ENCODE measurements at regions of chr17 and their contacts with region 1.

Region 1: GRCh38 chr17:48586355-48587258 is 3.4 kb downstream of the HOXB3 start:
- DNase-seq: no peak
- ATAC-seq: no peak
- H3K4me3 ChIP-seq: no peak overlapping the region; the same call in 2 of the 3 replicates
- H3K27ac ChIP-seq: peak overlapping the region; percentile 71 to 86; a peak in 5 of 6 replicates
- H3K4me1 ChIP-seq: peaks cover 21% of the 10 kb centered on the region
- CTCF ChIP-seq: no peak
- EP300 ChIP-seq: no peak
- POLR2A ChIP-seq: no peak
- RAD21 ChIP-seq: no peak

Region 2: DNA sequence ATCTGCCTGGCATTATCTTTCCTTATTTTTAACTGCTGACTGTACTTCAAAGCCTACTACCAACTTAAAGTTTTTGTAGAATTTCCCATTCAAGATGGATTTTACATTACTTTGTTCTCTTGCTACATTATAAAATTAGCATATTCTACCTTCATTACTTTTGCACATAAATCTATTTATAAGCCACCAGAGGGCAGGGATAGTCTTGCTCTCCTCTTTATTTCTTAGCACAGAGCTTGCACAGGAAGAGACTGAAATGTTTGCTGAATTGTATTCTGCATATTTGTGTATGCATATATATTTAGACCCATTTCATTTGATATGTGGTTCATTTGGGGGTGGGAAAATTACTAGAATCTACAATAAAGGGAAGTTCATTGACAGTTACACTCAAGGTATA is 264.5 kb before region 1 on chr17:
- CTCF ChIA-PET with region 1: interaction called, 13 read pairs
- POLR2A ChIA-PET with region 1: no interaction called
- DNase-seq: peak; percentile 15 to 30
- ATAC-seq: peak; percentile 44 to 54; a peak in 1 of 6 replicates
- H3K4me3 ChIP-seq: no peak overlapping the region
- H3K27ac ChIP-seq: no peak overlapping the region
- H3K4me1 ChIP-seq: no peaks in the 10 kb centered on the region
- CTCF ChIP-seq: 0 out of 3 replicates have a peak, but pooled peaks have one; percentile 19
- EP300 ChIP-seq: no peak
- POLR2A ChIP-seq: no peak
- RAD21 ChIP-seq: peak in 1 of 2 experiments; percentile 27; a peak in 2 of 5 replicates

Region 3: DNA sequence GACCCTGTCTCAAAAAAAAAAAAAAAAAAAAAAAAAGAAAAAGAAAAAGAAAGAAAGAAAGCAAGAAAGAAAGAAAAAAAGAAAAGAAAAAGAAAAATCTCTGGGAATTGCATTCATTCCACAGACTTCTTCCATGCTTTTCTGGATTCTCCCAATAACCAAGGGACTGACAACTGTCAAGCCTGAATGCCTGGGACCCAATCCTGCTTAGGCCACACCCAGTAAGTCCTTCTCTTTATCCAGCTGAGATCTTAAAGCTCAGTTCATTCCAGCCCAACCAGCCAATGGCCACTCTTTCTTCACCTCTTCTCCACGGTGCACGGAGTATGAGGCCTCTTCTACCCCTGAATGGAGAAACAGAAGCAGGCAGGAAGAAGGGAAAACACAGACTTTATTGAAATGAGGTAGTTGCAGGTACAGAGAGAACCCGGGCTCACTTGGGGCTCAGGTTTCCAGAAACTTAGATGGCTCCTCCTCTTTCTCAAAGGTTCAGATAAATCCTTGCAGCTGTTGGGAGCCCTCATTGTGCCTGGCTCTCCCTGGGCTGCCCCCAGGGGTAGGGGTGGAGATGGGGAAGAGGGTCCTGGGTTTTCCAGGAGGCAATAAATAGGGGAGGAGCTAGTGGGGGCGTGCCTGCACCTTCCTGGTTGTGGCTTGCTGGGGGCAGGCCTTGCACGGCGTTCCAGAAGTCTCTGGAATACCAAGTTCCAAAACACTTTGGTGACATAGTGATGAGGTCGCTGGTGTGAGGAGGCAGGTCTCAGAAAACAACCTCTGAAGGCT is 58.3 kb before region 1 on chr17:
- CTCF ChIA-PET with region 1: no interaction called
- POLR2A ChIA-PET with region 1: no interaction called
- DNase-seq: no peak
- ATAC-seq: no peak
- H3K4me3 ChIP-seq: no peak overlapping the region
- H3K27ac ChIP-seq: no peak overlapping the region
- H3K4me1 ChIP-seq: peaks cover 2% of the 10 kb centered on the region
- CTCF ChIP-seq: no peak
- EP300 ChIP-seq: no peak
- POLR2A ChIP-seq: no peak
- RAD21 ChIP-seq: no peak

Measured in A549 (cell line).